SK-N-SH (cell line): ENCODE measurements at regions of chr19 and their contacts with region 1.

Region 1: GRCh38 chr19:41353466-41354342 is at the start of gene TGFB1:
- DNase-seq: peak; percentile 96
- H3K4me3 ChIP-seq: peak within 1 kb of the TSS; percentile 65 to 99
- H3K27ac ChIP-seq: peak within 1 kb of the TSS; percentile 11 to 79
- H3K4me1 ChIP-seq: peaks cover 0 to 34% of the 10 kb centered on the region in 2 experiments; a peak in 2 of 4 replicates
- H3K27me3 ChIP-seq: no peaks in the 10 kb centered on the region
- CTCF ChIP-seq: peak; percentile 88
- EP300 ChIP-seq: no peak
- RAD21 ChIP-seq: peak; percentile 52
- polyA plus RNA-seq, gene TGFB1: 13.5 and 25.5 TPM in 2 replicates

Region 2: GRCh38 chr19:41206926-41207750 is 146.6 kb before region 1 on chr19:
- CTCF ChIA-PET with region 1: interaction called, 10 read pairs
- POLR2A ChIA-PET with region 1: no interaction called
- DNase-seq: no peak
- H3K4me3 ChIP-seq: no peak overlapping the region
- H3K27ac ChIP-seq: no peak overlapping the region
- H3K4me1 ChIP-seq: no peaks in the 10 kb centered on the region
- H3K27me3 ChIP-seq: no peaks in the 10 kb centered on the region
- CTCF ChIP-seq: no peak
- EP300 ChIP-seq: no peak
- RAD21 ChIP-seq: no peak

Region 3: GRCh38 chr19:41321600-41322270 is 32.0 kb before region 1 on chr19:
- CTCF ChIA-PET with region 1: interaction called, 29 read pairs
- POLR2A ChIA-PET with region 1: interaction called, 3 read pairs
- DNase-seq: peak; percentile 90
- H3K4me3 ChIP-seq: no peak overlapping the region; a peak in 1 of 4 replicates
- H3K27ac ChIP-seq: peak overlapping the region; percentile 44 to 100
- H3K4me1 ChIP-seq: peaks cover 46 to 53% of the 10 kb centered on the region in 2 experiments
- H3K27me3 ChIP-seq: no peaks in the 10 kb centered on the region
- CTCF ChIP-seq: peak; percentile 80
- EP300 ChIP-seq: no peak
- RAD21 ChIP-seq: peak; percentile 53

Region 4: DNA sequence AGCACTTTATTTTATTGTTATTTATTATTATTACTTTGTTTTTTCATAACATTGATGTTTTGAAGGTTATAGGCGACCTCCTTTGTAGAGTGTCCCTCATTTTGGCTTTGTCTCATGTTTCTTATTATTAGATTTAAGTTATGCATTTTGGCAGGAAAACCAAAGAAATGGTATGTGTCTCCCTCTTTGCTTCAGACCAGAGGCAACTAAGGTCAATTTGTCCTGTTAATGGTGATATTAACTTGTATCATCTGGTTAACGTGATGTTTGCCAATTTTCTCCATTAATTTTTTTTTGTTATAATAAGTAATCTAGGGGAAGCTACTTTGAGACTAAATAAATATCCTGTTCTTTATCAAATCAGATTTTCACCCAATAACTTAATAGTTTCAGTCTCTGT is 18.8 kb after region 1 on chr19:
- CTCF ChIA-PET with region 1: interaction called, 12 read pairs
- POLR2A ChIA-PET with region 1: no interaction called
- DNase-seq: no peak
- H3K4me3 ChIP-seq: no peak overlapping the region
- H3K27ac ChIP-seq: no peak overlapping the region
- H3K4me1 ChIP-seq: peaks cover 11 to 14% of the 10 kb centered on the region in 2 experiments; a peak in 3 of 4 replicates
- H3K27me3 ChIP-seq: no peaks in the 10 kb centered on the region
- CTCF ChIP-seq: no peak
- EP300 ChIP-seq: no peak
- RAD21 ChIP-seq: no peak